Psoas muscle (tissue), 8 donors: ENCODE measurements at regions of chr20 and their contacts with region 1.

Region 1: GRCh38 chr20:40962730-40963504 is 65.7 kb upstream of the TOP1 start:
- DNase-seq: peak; percentile 61 to 78
- ATAC-seq: peak; percentile 79 to 95 (median 87)
- H3K4me3 ChIP-seq: no peak overlapping the region
- H3K27ac ChIP-seq: no peak overlapping the region
- H3K4me1 ChIP-seq: no peaks in the 10 kb centered on the region
- H3K27me3 ChIP-seq: no peaks in the 10 kb centered on the region
- CTCF ChIP-seq: peak; percentile 92

Region 2: DNA sequence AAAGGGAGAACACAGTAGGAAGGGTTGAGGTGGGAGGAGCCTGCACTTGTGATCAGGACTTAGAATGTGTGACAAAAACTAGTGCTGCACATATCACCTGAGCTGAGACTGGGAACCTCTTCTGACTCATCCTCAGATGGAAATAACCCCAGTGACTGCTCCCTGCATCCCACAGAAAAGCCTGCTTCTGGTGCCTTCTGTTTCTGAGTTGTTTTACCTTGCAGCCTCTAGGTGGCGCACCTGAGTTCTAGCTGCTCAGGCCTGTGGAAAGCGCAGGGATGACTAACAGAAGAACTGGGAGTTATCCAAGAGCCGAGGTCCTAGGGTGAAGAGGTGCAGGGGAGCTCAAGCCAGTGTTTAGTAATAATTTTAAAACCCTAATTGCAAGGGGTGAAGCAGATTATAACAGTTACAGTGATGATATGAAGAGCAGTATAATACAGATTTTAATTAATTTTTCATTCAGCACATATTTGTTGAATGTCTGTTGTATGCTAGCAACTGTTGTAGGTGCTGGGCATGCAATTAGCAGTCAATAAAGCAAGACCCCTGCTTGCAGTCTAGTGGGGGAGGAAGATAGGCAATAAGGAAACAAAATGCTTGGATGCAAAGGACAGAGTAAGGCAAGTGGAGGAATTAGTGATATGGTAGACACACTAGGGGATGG is 1698.3 kb before region 1 on chr20:
- intact Hi-C with region 1: loop called in 1 of 2 experiments (anchors 10 kb)
- DNase-seq: peak; percentile 65 to 74
- ATAC-seq: peak; percentile 72 to 90 (median 88)
- H3K4me3 ChIP-seq: no peak overlapping the region
- H3K27ac ChIP-seq: no peak overlapping the region
- H3K4me1 ChIP-seq: no peaks in the 10 kb centered on the region
- H3K27me3 ChIP-seq: no peaks in the 10 kb centered on the region
- CTCF ChIP-seq: peak; percentile 79

Region 3: DNA sequence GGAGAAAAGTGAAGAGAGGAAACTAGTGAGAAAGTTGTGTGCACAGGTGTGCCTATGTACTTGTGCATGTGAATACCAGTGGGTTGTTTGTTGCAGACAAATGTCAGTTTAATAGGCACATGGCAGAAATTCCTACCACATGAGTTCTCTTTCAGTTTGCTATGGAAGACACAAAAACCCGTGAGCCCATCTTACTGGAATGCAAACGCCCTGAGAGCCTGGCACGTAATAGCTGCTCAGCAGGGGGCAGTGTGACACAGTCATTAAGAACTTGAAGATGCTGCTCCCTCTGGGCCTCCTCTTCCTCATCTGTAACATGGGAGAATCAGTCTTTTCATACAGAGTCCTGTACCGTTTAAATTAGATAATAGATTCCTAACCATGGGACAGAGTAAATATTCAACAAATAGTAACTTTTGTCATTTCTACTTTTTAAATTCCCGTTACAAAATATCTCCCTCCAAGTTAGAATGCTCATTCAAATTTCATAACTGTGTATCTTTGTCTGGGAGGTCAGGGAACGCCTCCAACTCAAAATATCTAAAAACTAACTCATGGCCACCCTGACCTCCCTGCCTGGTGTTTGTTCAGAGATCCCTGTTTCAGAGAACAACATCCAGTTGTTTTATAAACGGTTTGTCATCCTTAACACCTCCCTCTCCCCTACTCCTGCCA is 1076.8 kb before region 1 on chr20:
- intact Hi-C with region 1: loop called in 1 of 2 experiments (anchors 5 kb)
- DNase-seq: peak; percentile 68 to 80
- ATAC-seq: peak; percentile 79 to 92 (median 88)
- H3K4me3 ChIP-seq: no peak overlapping the region
- H3K27ac ChIP-seq: no peak overlapping the region
- H3K4me1 ChIP-seq: no peaks in the 10 kb centered on the region
- H3K27me3 ChIP-seq: no peaks in the 10 kb centered on the region
- CTCF ChIP-seq: peak; percentile 71

Region 4: GRCh38 chr20:40741507-40742106 is 221.3 kb before region 1 on chr20:
- intact Hi-C with region 1: loop called (anchors 2 to 5 kb)
- DNase-seq: peak in 1 of 2 donors; percentile 27
- ATAC-seq: peak in 3 of 4 donors; percentile 47 to 67 (median 54)
- H3K4me3 ChIP-seq: no peak overlapping the region
- H3K27ac ChIP-seq: no peak overlapping the region
- H3K4me1 ChIP-seq: no peaks in the 10 kb centered on the region
- H3K27me3 ChIP-seq: peaks cover 0 to 14% (median 0%) of the 10 kb centered on the region in 3 donors
- CTCF ChIP-seq: peak; percentile 62

Region 5: GRCh38 chr20:40860487-40860902 is 102.4 kb before region 1 on chr20:
- intact Hi-C with region 1: no loop called
- DNase-seq: no peak
- ATAC-seq: peak; percentile 35 to 81 (median 57)
- H3K4me3 ChIP-seq: no peak overlapping the region
- H3K27ac ChIP-seq: no peak overlapping the region
- H3K4me1 ChIP-seq: peaks cover 13% of the 10 kb centered on the region
- H3K27me3 ChIP-seq: no peaks in the 10 kb centered on the region
- CTCF ChIP-seq: no peak

Region 6: GRCh38 chr20:41095110-41095969 is 132.4 kb after region 1 on chr20:
- intact Hi-C with region 1: loop called (anchors 1 to 5 kb)
- DNase-seq: peak; percentile 52 to 63
- ATAC-seq: peak; percentile 54 to 87 (median 68)
- H3K4me3 ChIP-seq: no peak overlapping the region
- H3K27ac ChIP-seq: no peak overlapping the region
- H3K4me1 ChIP-seq: no peaks in the 10 kb centered on the region
- H3K27me3 ChIP-seq: no peaks in the 10 kb centered on the region
- CTCF ChIP-seq: peak; percentile 86